ENCODE measurements at regions of chr3 and their contacts with region 1.

Region 1: DNA sequence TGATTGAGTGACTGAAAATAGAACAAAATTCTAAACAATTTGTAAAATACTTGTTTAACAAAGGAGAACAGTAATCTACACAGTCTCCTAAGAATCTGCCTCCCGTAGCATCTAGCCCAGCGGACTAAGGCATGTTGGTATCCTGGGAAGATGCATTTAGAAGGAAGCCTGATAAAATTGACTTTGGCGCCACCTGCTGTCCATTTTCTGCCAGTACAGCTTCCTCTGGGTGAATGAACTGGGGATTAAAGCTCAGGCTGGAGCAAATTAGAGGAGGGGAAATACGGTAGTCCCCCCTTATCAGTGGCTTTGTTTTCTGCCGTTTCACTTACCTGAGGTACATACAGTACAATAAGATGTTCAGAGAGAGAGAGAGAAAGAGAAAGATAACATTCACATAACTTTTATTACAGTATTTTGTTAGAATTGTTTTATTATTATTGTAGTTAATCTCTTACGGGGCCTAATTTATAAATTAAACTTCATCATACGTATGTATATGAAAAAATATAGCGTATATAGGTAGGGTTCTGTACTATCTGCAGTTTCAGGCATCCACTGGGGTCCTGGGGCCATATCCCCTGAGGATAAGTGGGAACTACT is 191.6 kb downstream of the GAP43 start:
- DNase-seq: peak; percentile 39 to 57 (median 52)
- H3K4me3 ChIP-seq: no peak overlapping the region
- H3K4me3 Mint-ChIP-seq: no peak overlapping the region
- H3K27ac ChIP-seq: no peak overlapping the region
- H3K27ac Mint-ChIP-seq: no peak overlapping the region
- H3K4me1 ChIP-seq: no peaks in the 10 kb centered on the region
- H3K4me1 Mint-ChIP-seq: no peaks in the 10 kb centered on the region
- H3K27me3 ChIP-seq: no peaks in the 10 kb centered on the region
- H3K27me3 Mint-ChIP-seq: peaks cover 0 to 2% of the 10 kb centered on the region in 2 donors

Region 2: DNA sequence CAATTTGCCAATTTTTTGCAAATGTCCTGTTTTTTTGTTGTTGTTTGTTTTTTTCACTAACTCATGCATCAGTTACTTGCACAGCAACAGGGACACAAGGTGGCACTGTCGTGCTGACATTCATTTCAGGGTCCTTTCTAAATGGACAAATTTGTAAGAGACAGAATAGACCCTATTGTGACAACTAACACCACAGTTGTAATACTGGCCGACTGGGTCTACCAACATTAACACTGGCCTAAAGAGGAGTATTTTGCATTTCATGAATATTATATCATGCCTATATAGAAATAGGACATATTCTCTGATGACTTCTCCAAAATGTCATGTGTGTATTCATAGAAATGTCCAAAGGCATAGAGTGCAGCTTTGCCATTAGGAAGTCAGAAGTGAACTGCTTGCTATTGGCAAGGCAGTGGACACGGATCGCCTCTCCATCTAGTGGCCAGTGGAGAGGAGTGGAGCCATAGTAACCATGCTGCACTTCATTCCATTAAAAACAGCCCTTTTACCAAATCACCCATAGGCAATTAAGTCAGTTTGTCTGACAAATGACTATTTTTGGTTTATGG is 722.6 kb before region 1 on chr3:
- CTCF ChIA-PET with region 1: interaction called, 5 read pairs
- POLR2A ChIA-PET with region 1: no interaction called
- intact Hi-C with region 1: loop called (anchors 1 kb)
- DNase-seq: peak; percentile 43 to 62 (median 48)
- H3K4me3 ChIP-seq: no peak overlapping the region
- H3K4me3 Mint-ChIP-seq: no peak overlapping the region
- H3K27ac ChIP-seq: no peak overlapping the region
- H3K27ac Mint-ChIP-seq: no peak overlapping the region
- H3K4me1 ChIP-seq: peaks cover 4% of the 10 kb centered on the region
- H3K4me1 Mint-ChIP-seq: peaks cover 12 to 20% (median 16%) of the 10 kb centered on the region in 4 donors
- H3K27me3 ChIP-seq: no peaks in the 10 kb centered on the region
- H3K27me3 Mint-ChIP-seq: no peaks in the 10 kb centered on the region

Region 3: GRCh38 chr3:115792206-115792955 is 22.5 kb before region 1 on chr3:
- CTCF ChIA-PET with region 1: interaction called, 7 read pairs
- POLR2A ChIA-PET with region 1: no interaction called
- intact Hi-C with region 1: loop called (anchors 2 kb)
- DNase-seq: peak; percentile 45 to 72 (median 60)
- H3K4me3 ChIP-seq: no peak overlapping the region
- H3K4me3 Mint-ChIP-seq: peak overlapping the region; percentile 12 to 81 (median 62)
- H3K27ac ChIP-seq: no peak overlapping the region
- H3K27ac Mint-ChIP-seq: peak overlapping the region; percentile 80 to 94 (median 85)
- H3K4me1 ChIP-seq: peaks cover 16% of the 10 kb centered on the region
- H3K4me1 Mint-ChIP-seq: peaks cover 19 to 30% (median 23%) of the 10 kb centered on the region in 4 donors
- H3K27me3 ChIP-seq: no peaks in the 10 kb centered on the region
- H3K27me3 Mint-ChIP-seq: no peaks in the 10 kb centered on the region

Region 4: DNA sequence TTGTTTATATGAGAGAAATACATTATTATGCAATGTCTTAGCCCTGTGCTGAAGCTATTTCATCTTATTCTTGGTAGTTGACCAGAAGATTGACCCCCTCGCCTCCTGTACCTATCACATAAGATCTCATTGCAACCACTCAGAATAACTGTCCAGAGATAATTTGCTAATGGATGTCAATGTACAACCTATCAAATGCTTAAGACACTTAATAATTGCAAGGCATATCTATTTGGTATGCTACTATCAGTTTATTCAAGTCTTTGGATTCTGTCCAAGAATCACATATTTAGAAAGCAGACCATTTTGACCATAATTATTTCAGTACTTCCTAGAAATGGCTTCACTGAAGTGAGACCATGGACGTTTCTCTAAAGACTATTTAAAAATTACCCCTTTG is 50.0 kb after region 1 on chr3:
- CTCF ChIA-PET with region 1: no interaction called
- POLR2A ChIA-PET with region 1: no interaction called
- intact Hi-C with region 1: no loop called
- DNase-seq: no peak
- H3K4me3 ChIP-seq: no peak overlapping the region
- H3K4me3 Mint-ChIP-seq: no peak overlapping the region
- H3K27ac ChIP-seq: no peak overlapping the region
- H3K27ac Mint-ChIP-seq: no peak overlapping the region
- H3K4me1 ChIP-seq: no peaks in the 10 kb centered on the region
- H3K4me1 Mint-ChIP-seq: no peaks in the 10 kb centered on the region
- H3K27me3 ChIP-seq: no peaks in the 10 kb centered on the region
- H3K27me3 Mint-ChIP-seq: peaks cover 24 to 28% of the 10 kb centered on the region in 2 donors

Measured in CD4-positive, alpha-beta memory T cell (primary cell).